Activated CD8-positive, alpha-beta T cell treated with anti-CD3 and anti-CD28 coated beads, Interleukin-2, amount 10 ng/mL, durations not matched to agents 7 days and 5 days (primary cell): ENCODE measurements at regions of chr11 and their contacts with region 1.

Region 1: GRCh38 chr11:66126808-66127555 is 56.9 kb downstream of the PACS1 start:
- DNase-seq: peak; percentile 73
- ATAC-seq: peak; percentile 88
- H3K4me3 Mint-ChIP-seq: peak overlapping the region; percentile 51
- H3K27ac Mint-ChIP-seq: peak overlapping the region; percentile 91
- H3K4me1 Mint-ChIP-seq: peaks cover 58% of the 10 kb centered on the region
- H3K27me3 Mint-ChIP-seq: no peaks in the 10 kb centered on the region

Region 2: DNA sequence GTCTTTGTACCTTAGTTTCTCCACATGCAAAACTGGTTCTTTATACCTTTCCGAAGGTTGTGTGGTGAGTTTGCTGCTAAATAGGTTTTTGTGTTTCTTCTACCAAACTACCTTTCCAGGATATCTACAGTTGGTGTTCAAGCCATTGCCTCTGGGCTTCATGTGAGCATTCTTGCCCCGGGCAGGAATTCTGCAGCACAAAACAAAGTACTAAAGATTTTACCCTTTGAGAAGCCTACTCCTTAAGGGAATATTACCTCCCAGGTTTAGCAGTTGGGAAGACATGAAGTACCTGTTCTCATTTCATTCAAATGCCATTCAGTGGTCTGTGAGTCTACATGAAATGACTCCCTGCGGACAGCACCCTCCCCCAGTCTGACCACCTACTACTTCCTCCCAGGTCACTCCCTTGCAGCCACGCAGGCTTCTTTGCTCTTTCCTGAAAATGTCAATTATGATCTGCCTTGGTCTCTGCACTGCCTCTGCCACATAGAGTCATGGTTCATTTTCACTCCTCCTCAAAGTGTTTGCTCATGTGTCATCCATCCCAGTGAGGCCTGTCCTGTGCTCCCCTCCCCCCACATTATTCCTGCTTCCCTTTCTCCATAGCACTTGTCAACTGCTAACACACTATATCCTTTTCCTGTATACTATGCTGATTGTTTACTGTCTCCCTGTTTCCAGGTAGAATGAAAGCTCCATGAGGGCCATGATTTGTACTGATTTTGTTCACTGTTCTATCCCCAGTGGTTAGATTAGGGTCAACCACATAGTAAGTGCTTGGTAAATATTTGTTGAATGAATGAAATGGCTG is 20.0 kb before region 1 on chr11:
- CTCF ChIA-PET with region 1: interaction called, 11 read pairs
- POLR2A ChIA-PET with region 1: interaction called, 5 read pairs
- DNase-seq: peak; percentile 42
- ATAC-seq: peak; percentile 28
- H3K4me3 Mint-ChIP-seq: peak overlapping the region; percentile 12
- H3K27ac Mint-ChIP-seq: peak overlapping the region; percentile 79
- H3K4me1 Mint-ChIP-seq: peaks cover 73% of the 10 kb centered on the region
- H3K27me3 Mint-ChIP-seq: no peaks in the 10 kb centered on the region

Region 3: DNA sequence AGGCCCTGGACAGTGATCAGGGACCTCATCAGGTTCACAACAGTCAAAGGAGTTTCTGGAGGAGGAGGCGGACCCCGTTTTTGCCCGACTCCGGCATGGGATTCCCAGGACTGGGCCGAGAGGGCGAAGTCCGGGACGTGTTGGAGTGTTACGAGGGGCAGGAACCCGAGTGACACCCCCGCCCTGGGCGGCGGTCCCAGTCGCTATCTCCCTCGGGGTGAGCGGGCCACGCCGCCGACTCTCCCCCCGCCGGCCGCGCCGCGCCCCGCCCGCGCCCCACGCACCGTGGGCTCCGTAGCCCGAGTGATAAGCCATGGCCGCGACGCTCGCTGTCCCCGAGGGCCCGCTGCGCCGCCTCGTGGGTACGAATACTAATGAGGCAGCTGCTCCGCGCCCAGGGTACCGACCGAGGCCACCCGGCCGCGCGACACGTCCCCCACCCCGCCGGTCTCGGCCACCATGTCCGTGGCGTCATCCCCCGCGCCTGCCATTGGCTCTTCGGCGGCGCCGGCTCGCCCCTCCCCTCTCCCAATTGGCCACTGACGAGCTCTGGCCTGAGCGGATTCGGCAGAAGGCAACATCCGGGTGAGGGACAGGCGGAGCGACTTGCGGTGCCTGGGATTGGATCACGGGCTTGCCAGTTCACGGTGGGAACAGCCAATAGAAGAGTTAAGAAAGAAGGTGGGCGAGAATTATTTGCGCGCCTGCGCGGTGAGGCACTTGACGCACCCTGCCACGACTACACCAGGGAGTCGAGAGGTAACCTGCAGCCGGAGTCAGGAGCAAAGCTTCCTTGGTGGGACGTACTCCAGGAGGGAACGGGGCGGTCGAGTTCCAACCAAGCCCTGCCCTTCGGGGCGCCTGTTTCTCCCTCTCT is 161.9 kb after region 1 on chr11 and contains the start of gene YIF1A:
- CTCF ChIA-PET with region 1: no interaction called
- POLR2A ChIA-PET with region 1: no interaction called
- DNase-seq: peak; percentile 99
- ATAC-seq: peak; percentile 95
- H3K4me3 Mint-ChIP-seq: peak within 1 kb of the TSS; percentile 85
- H3K27ac Mint-ChIP-seq: peak within 1 kb of the TSS; percentile 91
- H3K4me1 Mint-ChIP-seq: peaks cover 42% of the 10 kb centered on the region
- H3K27me3 Mint-ChIP-seq: peaks cover 26% of the 10 kb centered on the region
- total RNA-seq, gene YIF1A: 46.6 to 58.6 TPM